MCF 10A (cell line): ENCODE measurements at regions of chr15 and their contacts with region 1.

Region 1: GRCh38 chr15:73240866-73241499 is 127.8 kb downstream of the HCN4 start:
- DNase-seq: peak; percentile 71
- H3K4me3 Mint-ChIP-seq: no peak overlapping the region
- H3K27ac Mint-ChIP-seq: no peak overlapping the region
- H3K4me1 Mint-ChIP-seq: no peaks in the 10 kb centered on the region
- H3K27me3 Mint-ChIP-seq: no peaks in the 10 kb centered on the region
- CTCF ChIP-seq: peak; percentile 72

Region 2: DNA sequence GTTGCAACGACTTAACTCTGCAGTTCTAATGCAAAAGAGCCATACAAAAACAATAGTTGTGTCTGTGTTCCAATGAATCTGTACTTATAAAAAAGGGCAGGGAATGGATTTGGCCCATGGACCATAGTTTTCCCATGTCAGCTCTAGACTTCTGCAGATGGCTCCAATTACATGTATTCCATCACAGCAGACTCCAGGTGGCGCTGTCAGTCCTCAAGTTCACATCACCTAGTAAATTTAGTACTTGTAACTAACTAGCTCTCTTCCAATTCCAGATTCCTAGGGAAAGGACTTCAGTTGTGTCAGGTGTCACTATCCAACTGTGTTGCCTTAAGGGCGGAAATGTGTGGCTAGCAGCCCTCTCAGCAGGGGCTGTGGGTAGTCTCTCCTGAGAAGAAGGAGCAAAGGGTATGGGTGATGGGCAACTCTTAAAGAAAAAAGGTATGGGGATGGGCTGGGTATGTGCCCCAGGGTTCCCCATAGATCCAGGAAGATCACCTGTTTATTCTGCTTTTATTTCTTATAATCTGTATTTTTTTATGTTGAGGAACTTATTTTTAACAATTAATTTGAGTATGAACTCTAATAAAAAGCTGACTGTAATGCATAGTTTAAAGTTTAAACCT is 518.8 kb before region 1 on chr15:
- CTCF ChIA-PET with region 1: no interaction called
- POLR2A ChIA-PET with region 1: no interaction called
- intact Hi-C with region 1: loop called (anchors 10 kb)
- DNase-seq: peak; percentile 64
- H3K4me3 Mint-ChIP-seq: no peak overlapping the region
- H3K27ac Mint-ChIP-seq: no peak overlapping the region
- H3K4me1 Mint-ChIP-seq: no peaks in the 10 kb centered on the region
- H3K27me3 Mint-ChIP-seq: no peaks in the 10 kb centered on the region
- CTCF ChIP-seq: peak; percentile 84

Region 3: DNA sequence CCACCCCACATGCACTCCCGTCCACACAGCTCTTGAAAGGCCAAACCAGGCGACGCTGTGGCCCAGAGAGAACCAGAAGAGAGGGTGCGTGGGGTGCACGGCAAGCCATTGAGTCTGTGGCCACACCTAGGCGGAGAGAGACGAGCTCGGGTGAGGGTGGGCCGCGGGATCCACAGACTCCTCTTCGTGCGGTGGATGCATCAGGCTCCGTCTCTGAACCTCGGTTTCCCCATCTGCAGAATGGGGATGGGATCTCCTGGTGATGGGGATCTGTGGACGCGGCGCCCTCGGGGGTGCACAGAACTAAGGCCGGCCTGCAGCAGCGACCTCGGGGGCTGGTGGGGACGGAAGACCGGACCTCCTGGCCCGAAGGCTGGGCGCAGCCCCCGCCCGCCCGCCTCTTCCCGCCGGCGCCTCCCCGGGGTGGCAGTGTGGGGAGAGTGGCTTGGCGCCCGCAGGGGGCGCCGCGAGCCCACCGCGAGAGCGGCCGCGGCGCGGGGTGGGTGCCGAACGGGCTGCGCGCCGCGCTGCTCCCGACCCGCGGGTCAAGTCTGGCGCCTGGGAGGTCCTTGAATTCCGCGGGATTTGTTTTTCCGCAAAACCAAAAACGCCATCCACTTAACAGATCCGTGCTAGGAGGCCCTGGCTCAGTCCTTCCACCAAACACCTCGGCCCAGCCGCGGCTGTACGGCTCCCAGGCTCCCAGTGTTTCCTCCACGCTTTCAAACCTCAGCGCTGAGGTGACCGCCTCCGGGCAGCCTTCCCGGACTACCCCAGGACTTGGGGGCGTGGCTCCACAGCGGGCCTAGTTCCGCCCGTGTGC is 444.3 kb before region 1 on chr15:
- CTCF ChIA-PET with region 1: no interaction called
- POLR2A ChIA-PET with region 1: no interaction called
- intact Hi-C with region 1: loop called (anchors 2 kb)
- DNase-seq: peak; percentile 33
- H3K4me3 Mint-ChIP-seq: peak overlapping the region; percentile 65
- H3K27ac Mint-ChIP-seq: no peak overlapping the region
- H3K4me1 Mint-ChIP-seq: no peaks in the 10 kb centered on the region
- H3K27me3 Mint-ChIP-seq: peaks cover 6% of the 10 kb centered on the region
- CTCF ChIP-seq: peak; percentile 56

Region 4: GRCh38 chr15:73210630-73211029 is 30.4 kb before region 1 on chr15:
- CTCF ChIA-PET with region 1: interaction called, 14 read pairs
- POLR2A ChIA-PET with region 1: no interaction called
- intact Hi-C with region 1: no loop called
- DNase-seq: no peak
- H3K4me3 Mint-ChIP-seq: no peak overlapping the region
- H3K27ac Mint-ChIP-seq: no peak overlapping the region
- H3K4me1 Mint-ChIP-seq: no peaks in the 10 kb centered on the region
- H3K27me3 Mint-ChIP-seq: no peaks in the 10 kb centered on the region
- CTCF ChIP-seq: no peak

Region 5: DNA sequence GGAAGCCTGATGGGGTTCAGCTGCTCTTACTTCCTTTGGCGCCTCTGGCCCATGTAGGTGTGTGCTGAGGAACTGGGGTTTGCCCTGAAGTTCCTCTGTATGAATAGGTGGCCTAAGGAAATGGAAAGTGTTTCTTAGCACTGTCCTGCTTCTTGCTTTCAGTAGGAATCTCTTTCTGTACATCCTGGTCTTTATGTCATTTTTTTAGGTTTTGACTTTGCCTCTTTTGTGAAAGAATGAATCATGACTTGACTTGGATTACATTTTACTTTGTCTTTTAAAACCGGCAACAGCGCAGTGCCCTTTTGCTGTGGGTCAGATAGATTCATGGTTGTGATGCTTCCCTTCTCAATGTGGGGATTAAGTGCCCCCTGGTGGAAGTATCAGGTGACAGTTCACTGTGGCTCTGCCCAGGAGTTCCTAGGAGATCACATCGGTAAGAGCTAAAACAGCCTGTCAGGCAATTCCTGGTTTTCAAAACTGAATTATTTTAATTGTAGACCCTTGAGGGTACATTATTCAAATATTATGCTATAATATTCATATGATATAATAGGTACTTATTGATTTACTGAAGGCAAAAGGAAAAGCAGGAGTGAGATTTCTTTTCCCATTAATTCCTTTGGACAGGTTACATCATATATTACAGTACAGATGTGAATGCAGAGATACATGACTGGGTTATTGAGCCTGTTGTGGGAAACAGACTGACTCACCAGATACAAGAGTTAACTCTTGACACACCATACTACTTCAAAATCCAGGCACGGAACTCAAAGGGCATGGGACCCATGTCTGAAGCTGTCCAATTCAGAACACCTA is 32.4 kb after region 1 on chr15:
- CTCF ChIA-PET with region 1: interaction called, 24 read pairs
- POLR2A ChIA-PET with region 1: interaction called, 4 read pairs
- intact Hi-C with region 1: loop called (anchors 1 kb)
- DNase-seq: peak; percentile 74
- H3K4me3 Mint-ChIP-seq: no peak overlapping the region
- H3K27ac Mint-ChIP-seq: no peak overlapping the region
- H3K4me1 Mint-ChIP-seq: no peaks in the 10 kb centered on the region
- H3K27me3 Mint-ChIP-seq: no peaks in the 10 kb centered on the region
- CTCF ChIP-seq: peak; percentile 71

Region 6: GRCh38 chr15:73628102-73628501 is 387.1 kb after region 1 on chr15:
- CTCF ChIA-PET with region 1: no interaction called
- POLR2A ChIA-PET with region 1: no interaction called
- intact Hi-C with region 1: no loop called
- DNase-seq: no peak
- H3K4me3 Mint-ChIP-seq: peak overlapping the region; percentile 15
- H3K27ac Mint-ChIP-seq: peak overlapping the region; percentile 37
- H3K4me1 Mint-ChIP-seq: peaks cover 49% of the 10 kb centered on the region
- H3K27me3 Mint-ChIP-seq: no peaks in the 10 kb centered on the region
- CTCF ChIP-seq: no peak